ENCODE measurements at regions of chr1 and their contacts with region 1.

Region 1: DNA sequence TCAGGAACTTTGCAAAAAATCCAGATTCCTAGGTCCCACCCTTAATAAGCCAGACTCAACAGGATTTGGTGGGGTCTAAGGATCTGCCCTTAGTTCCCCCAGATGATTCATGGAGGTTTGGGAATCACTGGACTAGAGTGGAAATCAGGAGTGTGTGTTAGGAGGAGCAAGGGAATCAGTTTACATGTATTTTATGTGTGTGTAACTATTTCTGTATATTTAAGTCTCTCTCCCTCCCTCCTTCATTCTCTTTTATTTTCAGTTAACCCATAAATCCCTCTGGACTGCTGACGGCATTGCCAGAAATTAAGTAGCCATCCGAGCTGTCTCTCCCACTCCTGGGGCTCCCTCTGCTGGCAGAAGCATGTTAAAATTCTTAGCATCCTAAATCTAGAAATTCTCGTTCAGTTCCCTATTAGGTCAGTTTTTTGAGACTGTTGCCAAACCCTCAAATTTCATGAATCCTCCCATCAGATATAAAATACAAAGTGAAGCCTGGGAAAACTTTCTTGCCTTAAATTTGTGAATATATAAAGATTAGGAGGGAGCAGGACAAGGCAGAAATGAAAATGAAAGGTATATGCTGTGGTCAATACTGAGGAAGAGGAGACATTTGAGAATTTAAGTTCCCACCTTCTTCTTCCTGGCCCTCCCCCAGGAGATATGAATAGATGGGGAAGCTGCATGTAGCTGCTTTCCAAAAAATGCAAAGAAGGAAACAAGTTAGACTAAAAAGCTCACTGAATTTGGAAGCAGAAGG is 11.7 kb upstream of the HSD11B1 start:
- DNase-seq: peak; percentile 61
- H3K4me3 ChIP-seq: no peak overlapping the region; a peak in 1 of 4 replicates
- H3K27ac ChIP-seq: peak overlapping the region; percentile 64; a peak in 3 of 4 replicates
- H3K4me1 ChIP-seq: peaks cover 4 to 27% of the 10 kb centered on the region in 2 experiments
- H3K27me3 ChIP-seq: no peaks in the 10 kb centered on the region
- CTCF ChIP-seq: peak; percentile 97
- EP300 ChIP-seq: no peak
- RAD21 ChIP-seq: peak; percentile 97

Region 2: GRCh38 chr1:209335178-209335577 is 357.7 kb before region 1 on chr1:
- CTCF ChIA-PET with region 1: no interaction called
- POLR2A ChIA-PET with region 1: no interaction called
- DNase-seq: peak; percentile 59
- H3K4me3 ChIP-seq: no peak overlapping the region
- H3K27ac ChIP-seq: no peak overlapping the region
- H3K4me1 ChIP-seq: no peaks in the 10 kb centered on the region; a peak in 2 of 4 replicates
- H3K27me3 ChIP-seq: no peaks in the 10 kb centered on the region
- CTCF ChIP-seq: peak; percentile 82
- EP300 ChIP-seq: no peak
- RAD21 ChIP-seq: peak; percentile 50

Region 3: GRCh38 chr1:209576798-209577197 is 116.1 kb before region 1 on chr1:
- CTCF ChIA-PET with region 1: interaction called, 30 read pairs
- POLR2A ChIA-PET with region 1: interaction called, 5 read pairs
- DNase-seq: peak; percentile 84
- H3K4me3 ChIP-seq: no peak overlapping the region; a peak in 1 of 4 replicates
- H3K27ac ChIP-seq: no peak overlapping the region
- H3K4me1 ChIP-seq: peaks cover 3 to 7% of the 10 kb centered on the region in 2 experiments; a peak in 1 of 4 replicates
- H3K27me3 ChIP-seq: no peaks in the 10 kb centered on the region
- CTCF ChIP-seq: peak; percentile 96
- EP300 ChIP-seq: no peak
- RAD21 ChIP-seq: peak; percentile 88

Region 4: GRCh38 chr1:209585672-209586071 is 107.3 kb before region 1 on chr1:
- CTCF ChIA-PET with region 1: interaction called, 15 read pairs
- POLR2A ChIA-PET with region 1: interaction called, 5 read pairs
- DNase-seq: peak; percentile 81
- H3K4me3 ChIP-seq: peak overlapping the region; percentile 31 to 80
- H3K27ac ChIP-seq: peak overlapping the region in 1 of 2 experiments; percentile 89; a peak in 3 of 4 replicates
- H3K4me1 ChIP-seq: peaks cover 18 to 52% of the 10 kb centered on the region in 2 experiments
- H3K27me3 ChIP-seq: no peaks in the 10 kb centered on the region
- CTCF ChIP-seq: peak; percentile 28; the same call in 1 of the 2 replicates
- EP300 ChIP-seq: no peak; a peak in 1 of 4 replicates
- RAD21 ChIP-seq: peak; percentile 19; the same call in 1 of the 2 replicates

Region 5: GRCh38 chr1:209601809-209602657 is 90.9 kb before region 1 on chr1:
- CTCF ChIA-PET with region 1: interaction called, 13 read pairs
- POLR2A ChIA-PET with region 1: no interaction called
- DNase-seq: peak; percentile 55
- H3K4me3 ChIP-seq: peak overlapping the region in 1 of 2 experiments; percentile 18; a peak in 1 of 4 replicates
- H3K27ac ChIP-seq: peak overlapping the region in 1 of 2 experiments; percentile 79; a peak in 1 of 4 replicates
- H3K4me1 ChIP-seq: peaks cover 0 to 27% of the 10 kb centered on the region in 2 experiments; a peak in 3 of 4 replicates
- H3K27me3 ChIP-seq: no peaks in the 10 kb centered on the region
- CTCF ChIP-seq: peak; percentile 71
- EP300 ChIP-seq: no peak
- RAD21 ChIP-seq: peak; percentile 77

Region 6: GRCh38 chr1:209674957-209675564 is 17.9 kb before region 1 on chr1 and contains the start of gene G0S2:
- CTCF ChIA-PET with region 1: interaction called, 34 read pairs
- POLR2A ChIA-PET with region 1: interaction called, 4 read pairs
- DNase-seq: peak; percentile 78
- H3K4me3 ChIP-seq: peak within 1 kb of the TSS; percentile 47 to 55
- H3K27ac ChIP-seq: no peak within 1 kb of the TSS
- H3K4me1 ChIP-seq: peaks cover 11 to 13% of the 10 kb centered on the region in 2 experiments; a peak in 3 of 4 replicates
- H3K27me3 ChIP-seq: no peaks in the 10 kb centered on the region
- CTCF ChIP-seq: no peak
- EP300 ChIP-seq: no peak
- RAD21 ChIP-seq: no peak
- polyA plus RNA-seq, gene G0S2: 32.5 and 43.2 TPM in 2 replicates

Region 7: GRCh38 chr1:209708297-209708696 is 15.4 kb after region 1 on chr1:
- CTCF ChIA-PET with region 1: interaction called, 13 read pairs
- POLR2A ChIA-PET with region 1: no interaction called
- DNase-seq: no peak
- H3K4me3 ChIP-seq: no peak overlapping the region
- H3K27ac ChIP-seq: no peak overlapping the region
- H3K4me1 ChIP-seq: peaks cover 0 to 15% of the 10 kb centered on the region in 2 experiments; a peak in 3 of 4 replicates
- H3K27me3 ChIP-seq: no peaks in the 10 kb centered on the region
- CTCF ChIP-seq: no peak
- EP300 ChIP-seq: no peak
- RAD21 ChIP-seq: no peak